Endothelial cell of umbilical vein (primary cell): ENCODE measurements at regions of chr11 and their contacts with region 1.

Region 1: DNA sequence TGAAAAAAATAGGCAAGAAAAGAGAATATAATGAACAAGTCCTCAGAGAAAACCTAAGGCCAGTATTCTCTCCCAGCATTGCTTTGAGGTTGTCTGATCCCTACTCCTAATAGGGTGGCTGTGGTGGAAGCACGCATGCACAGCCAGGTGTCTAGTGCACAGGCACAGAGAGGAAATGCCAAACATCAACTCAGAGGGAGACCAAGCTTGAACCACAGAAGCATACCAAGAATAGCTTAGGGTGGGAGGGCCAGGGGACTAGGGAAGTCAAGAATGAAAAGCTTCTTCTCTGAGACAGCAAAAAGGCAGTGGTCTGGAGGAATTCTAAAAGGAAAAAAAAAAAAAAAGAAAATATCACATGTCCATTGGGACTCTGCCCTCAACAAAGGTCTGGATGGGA is 244.1 kb upstream of the API5 start:
- DNase-seq: no peak
- H3K4me3 ChIP-seq: no peak overlapping the region
- H3K27ac ChIP-seq: no peak overlapping the region
- H3K4me1 ChIP-seq: no peaks in the 10 kb centered on the region
- H3K27me3 ChIP-seq: no peaks in the 10 kb centered on the region
- CTCF ChIP-seq: no peak
- POLR2A ChIP-seq: no peak

Region 2: GRCh38 chr11:43486141-43486540 is 418.5 kb after region 1 on chr11:
- CTCF ChIA-PET with region 1: no interaction called
- POLR2A ChIA-PET with region 1: no interaction called
- dilution Hi-C with region 1: no loop called
- intact Hi-C with region 1: loop called (anchors 5 kb)
- DNase-seq: no peak
- H3K4me3 ChIP-seq: no peak overlapping the region
- H3K27ac ChIP-seq: no peak overlapping the region
- H3K4me1 ChIP-seq: no peaks in the 10 kb centered on the region
- H3K27me3 ChIP-seq: no peaks in the 10 kb centered on the region
- CTCF ChIP-seq: no peak
- POLR2A ChIP-seq: no peak